GM12878 (cell line): ENCODE measurements at regions of chr12 and their contacts with region 1.

Region 1: DNA sequence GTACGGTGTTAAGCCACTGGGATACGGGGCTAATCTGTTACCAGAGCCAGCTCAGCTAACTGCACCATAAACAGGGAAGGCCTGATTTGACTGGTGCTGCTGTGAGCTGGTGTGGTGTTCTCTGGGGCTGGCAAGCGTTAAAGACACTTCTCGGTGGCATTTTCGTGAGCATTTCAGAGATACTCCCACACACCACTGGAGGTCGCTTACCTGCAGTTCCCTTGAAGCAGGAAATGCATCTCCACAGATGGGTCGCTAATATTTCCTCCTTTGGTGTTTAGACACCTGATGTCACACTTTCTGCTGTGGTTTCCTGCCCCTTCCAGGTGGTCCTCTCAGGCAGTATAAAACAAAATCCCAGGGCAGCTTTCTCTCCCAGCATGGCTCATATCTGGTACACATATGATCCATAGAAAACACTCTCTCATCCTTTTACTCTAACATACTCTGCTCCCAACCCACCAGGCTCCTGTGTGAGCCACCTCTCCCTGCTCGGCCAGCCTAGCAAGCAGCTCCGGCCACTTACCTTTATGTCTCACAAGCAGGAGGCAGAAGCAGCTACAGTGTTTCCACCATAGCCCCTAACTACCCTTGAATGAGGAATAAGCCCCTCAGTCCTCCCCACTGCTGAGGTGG is 129.9 kb upstream of the GRIN2B start:
- DNase-seq: peak; percentile 33
- ATAC-seq: peak; percentile 99
- H3K4me3 ChIP-seq: no peak overlapping the region
- H3K27ac ChIP-seq: no peak overlapping the region
- H3K4me1 ChIP-seq: peaks cover 7% of the 10 kb centered on the region
- H3K27me3 ChIP-seq: no peaks in the 10 kb centered on the region
- CTCF ChIP-seq: peak; percentile 56 to 81 (median 76)
- EP300 ChIP-seq: no peak
- POLR2A ChIP-seq: no peak
- RAD21 ChIP-seq: peak; percentile 73

Region 2: DNA sequence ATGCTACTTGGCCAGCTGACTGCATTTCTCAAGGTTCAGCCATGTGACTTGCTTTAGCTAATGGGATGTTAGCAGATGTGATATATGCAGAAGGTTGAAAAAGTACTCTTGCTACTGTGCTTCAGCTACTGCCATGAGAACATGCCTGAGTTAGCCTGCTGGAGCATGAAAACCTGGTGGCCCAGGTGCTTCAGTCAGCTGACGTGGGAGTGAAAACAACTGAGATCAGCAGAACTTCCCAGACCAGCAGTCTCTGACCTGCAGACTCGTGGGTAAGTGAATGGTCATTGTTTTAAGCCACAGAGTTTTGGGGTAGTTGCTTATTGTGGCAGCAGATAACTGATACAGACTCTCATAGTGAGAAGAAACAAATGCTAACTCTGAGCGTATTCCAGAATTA is 11.4 kb before region 1 on chr12:
- CTCF ChIA-PET with region 1: interaction called, 17 read pairs
- POLR2A ChIA-PET with region 1: no interaction called
- RAD21 ChIA-PET with region 1: no interaction called
- SMC1A ChIA-PET with region 1: interaction called, 5 read pairs
- in situ Hi-C with region 1: no loop called
- intact Hi-C with region 1: no loop called
- DNase-seq: no peak
- ATAC-seq: no peak
- H3K4me3 ChIP-seq: no peak overlapping the region
- H3K27ac ChIP-seq: no peak overlapping the region
- H3K4me1 ChIP-seq: no peaks in the 10 kb centered on the region
- H3K27me3 ChIP-seq: no peaks in the 10 kb centered on the region; a peak in 1 of 4 replicates
- CTCF ChIP-seq: no peak
- EP300 ChIP-seq: no peak
- POLR2A ChIP-seq: no peak
- RAD21 ChIP-seq: no peak

Region 3: DNA sequence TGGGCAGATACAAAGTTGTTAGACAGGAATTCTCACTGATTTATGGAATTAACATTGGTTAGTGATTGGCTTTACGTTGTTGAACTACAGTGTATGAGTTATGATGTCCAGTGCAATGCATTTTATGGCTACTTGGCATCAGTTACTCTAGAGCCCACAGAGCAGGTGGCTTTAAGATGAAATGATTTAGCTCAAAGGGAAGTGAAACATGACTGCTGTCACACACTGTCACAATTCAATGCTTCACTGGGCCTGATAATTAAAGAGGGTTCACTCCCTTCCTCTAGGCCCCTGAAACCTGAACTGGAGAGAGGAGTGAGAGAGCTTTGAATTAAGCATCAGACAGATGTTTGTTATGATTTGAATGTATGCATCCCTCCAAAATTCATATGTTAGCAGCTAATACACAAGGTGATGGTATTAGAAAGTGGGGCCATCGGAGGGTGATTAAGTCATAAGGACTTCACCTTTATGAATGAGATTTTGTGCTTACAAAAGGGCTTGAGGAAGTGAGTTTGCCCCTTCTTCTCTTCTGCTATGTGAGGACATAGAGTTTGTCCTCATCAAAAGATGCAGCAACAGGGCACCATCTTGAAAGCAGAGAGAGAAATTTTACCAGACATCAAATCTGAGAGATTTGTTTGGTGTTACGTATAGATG is 45.9 kb after region 1 on chr12:
- CTCF ChIA-PET with region 1: interaction called, 13 read pairs
- POLR2A ChIA-PET with region 1: interaction called, 3 read pairs
- RAD21 ChIA-PET with region 1: no interaction called
- SMC1A ChIA-PET with region 1: interaction called, 12 read pairs
- in situ Hi-C with region 1: no loop called
- intact Hi-C with region 1: loop called (anchors 2 kb)
- DNase-seq: peak; percentile 99
- ATAC-seq: peak; percentile 97
- H3K4me3 ChIP-seq: no peak overlapping the region
- H3K27ac ChIP-seq: peak overlapping the region; percentile 86
- H3K4me1 ChIP-seq: peaks cover 44% of the 10 kb centered on the region
- H3K27me3 ChIP-seq: no peaks in the 10 kb centered on the region
- CTCF ChIP-seq: no peak
- EP300 ChIP-seq: peak; percentile 92 to 99
- POLR2A ChIP-seq: no peak
- RAD21 ChIP-seq: no peak

Region 4: DNA sequence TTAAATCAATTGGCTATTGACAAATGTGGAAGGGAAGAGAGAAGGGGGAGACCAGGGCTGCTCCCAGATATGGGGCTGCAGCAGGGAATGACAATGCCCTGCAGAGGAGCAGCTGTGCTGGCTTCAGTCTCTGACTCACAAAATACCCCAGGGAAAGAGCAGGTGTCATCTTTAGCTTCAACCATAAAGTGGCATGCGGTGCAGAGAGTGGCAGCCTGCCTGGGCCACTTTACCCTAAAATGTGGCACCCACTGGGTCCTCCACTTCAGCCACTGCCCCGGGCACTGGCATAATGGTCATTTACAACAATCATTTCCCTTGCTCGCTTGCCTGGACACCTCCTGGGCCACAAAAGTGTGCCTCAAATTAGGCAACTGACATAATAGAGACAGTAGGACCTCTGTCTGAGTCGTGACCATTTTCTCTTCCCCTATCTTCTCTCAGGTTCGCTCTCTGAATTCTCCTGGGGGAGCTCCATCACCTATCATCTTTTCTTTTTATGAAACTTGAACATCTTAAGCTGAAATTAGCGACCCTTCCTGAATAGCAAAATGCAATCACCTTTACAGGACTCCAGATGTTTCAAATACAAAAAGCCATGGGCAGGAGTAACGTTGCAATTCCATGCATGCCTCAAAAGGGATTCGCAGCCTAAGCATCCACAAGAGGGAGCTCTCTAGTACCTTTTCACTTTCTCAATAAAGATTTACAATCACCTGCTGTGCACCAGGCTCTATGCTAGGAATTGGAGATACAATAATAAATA is 74.3 kb after region 1 on chr12:
- CTCF ChIA-PET with region 1: interaction called, 14 read pairs
- POLR2A ChIA-PET with region 1: no interaction called
- RAD21 ChIA-PET with region 1: no interaction called
- SMC1A ChIA-PET with region 1: interaction called, 8 read pairs
- in situ Hi-C with region 1: no loop called
- intact Hi-C with region 1: no loop called
- DNase-seq: no peak
- ATAC-seq: peak; percentile 91
- H3K4me3 ChIP-seq: no peak overlapping the region
- H3K27ac ChIP-seq: no peak overlapping the region
- H3K4me1 ChIP-seq: peaks cover 4% of the 10 kb centered on the region; the same call in 1 of the 2 replicates
- H3K27me3 ChIP-seq: no peaks in the 10 kb centered on the region
- CTCF ChIP-seq: peak; percentile 65 to 85 (median 68)
- EP300 ChIP-seq: no peak
- POLR2A ChIP-seq: no peak
- RAD21 ChIP-seq: peak; percentile 67